Activated CD4-positive, alpha-beta memory T cell treated with anti-CD3 and anti-CD28 coated beads for 36 hours (primary cell): ENCODE measurements at regions of chr1 and their contacts with region 1.

Region 1: GRCh38 chr1:200971955-200972711 is 51.4 kb downstream of the KIF21B start:
- DNase-seq: peak; percentile 68
- H3K4me3 Mint-ChIP-seq: no peak overlapping the region
- H3K27ac Mint-ChIP-seq: no peak overlapping the region
- H3K4me1 Mint-ChIP-seq: no peaks in the 10 kb centered on the region
- H3K27me3 Mint-ChIP-seq: no peaks in the 10 kb centered on the region

Region 2: GRCh38 chr1:200931776-200932175 is 40.4 kb before region 1 on chr1:
- CTCF ChIA-PET with region 1: no interaction called
- POLR2A ChIA-PET with region 1: no interaction called
- intact Hi-C with region 1: no loop called
- DNase-seq: no peak
- H3K4me3 Mint-ChIP-seq: no peak overlapping the region
- H3K27ac Mint-ChIP-seq: no peak overlapping the region
- H3K4me1 Mint-ChIP-seq: peaks cover 2% of the 10 kb centered on the region
- H3K27me3 Mint-ChIP-seq: peaks cover 19% of the 10 kb centered on the region

Region 3: DNA sequence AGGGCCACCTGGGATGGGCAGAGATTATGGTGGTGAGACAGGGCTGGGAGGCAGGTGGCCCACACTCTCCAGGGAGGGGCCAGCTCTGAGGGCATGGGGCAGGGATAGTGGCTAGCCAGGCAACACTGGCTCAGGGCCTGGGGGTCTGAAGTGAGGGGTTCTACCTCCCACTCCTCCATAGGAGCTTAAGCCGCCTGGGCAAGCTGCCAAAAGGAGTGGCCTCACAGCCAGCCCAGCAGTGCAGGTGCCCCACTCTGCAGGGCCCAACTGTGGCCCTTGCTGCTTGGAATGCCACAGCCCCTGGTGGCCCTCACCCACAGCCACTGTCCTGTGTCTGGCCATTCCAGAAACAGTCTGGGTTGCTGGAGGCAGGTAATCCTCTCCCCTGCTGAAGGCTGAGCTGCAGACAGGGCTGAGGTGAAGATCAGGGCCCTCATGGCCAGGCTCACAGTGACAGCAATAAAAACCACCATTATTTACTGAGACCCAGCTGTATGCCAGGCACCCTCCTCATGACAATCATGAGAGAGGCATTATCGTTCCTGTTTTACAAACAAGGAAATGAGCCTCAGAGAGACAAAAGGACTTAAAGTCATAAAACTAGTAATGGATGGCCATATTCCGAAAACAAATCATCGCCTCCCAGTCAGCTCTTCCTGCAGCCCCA is 20.4 kb after region 1 on chr1:
- CTCF ChIA-PET with region 1: interaction called, 16 read pairs
- POLR2A ChIA-PET with region 1: no interaction called
- intact Hi-C with region 1: no loop called
- DNase-seq: no peak
- H3K4me3 Mint-ChIP-seq: no peak overlapping the region
- H3K27ac Mint-ChIP-seq: no peak overlapping the region
- H3K4me1 Mint-ChIP-seq: no peaks in the 10 kb centered on the region
- H3K27me3 Mint-ChIP-seq: no peaks in the 10 kb centered on the region

Region 4: GRCh38 chr1:201016211-201016651 is 44.1 kb after region 1 on chr1:
- CTCF ChIA-PET with region 1: interaction called, 96 read pairs
- POLR2A ChIA-PET with region 1: no interaction called
- intact Hi-C with region 1: no loop called
- DNase-seq: no peak
- H3K4me3 Mint-ChIP-seq: no peak overlapping the region
- H3K27ac Mint-ChIP-seq: peak overlapping the region; percentile 87
- H3K4me1 Mint-ChIP-seq: peaks cover 94% of the 10 kb centered on the region
- H3K27me3 Mint-ChIP-seq: no peaks in the 10 kb centered on the region

Region 5: DNA sequence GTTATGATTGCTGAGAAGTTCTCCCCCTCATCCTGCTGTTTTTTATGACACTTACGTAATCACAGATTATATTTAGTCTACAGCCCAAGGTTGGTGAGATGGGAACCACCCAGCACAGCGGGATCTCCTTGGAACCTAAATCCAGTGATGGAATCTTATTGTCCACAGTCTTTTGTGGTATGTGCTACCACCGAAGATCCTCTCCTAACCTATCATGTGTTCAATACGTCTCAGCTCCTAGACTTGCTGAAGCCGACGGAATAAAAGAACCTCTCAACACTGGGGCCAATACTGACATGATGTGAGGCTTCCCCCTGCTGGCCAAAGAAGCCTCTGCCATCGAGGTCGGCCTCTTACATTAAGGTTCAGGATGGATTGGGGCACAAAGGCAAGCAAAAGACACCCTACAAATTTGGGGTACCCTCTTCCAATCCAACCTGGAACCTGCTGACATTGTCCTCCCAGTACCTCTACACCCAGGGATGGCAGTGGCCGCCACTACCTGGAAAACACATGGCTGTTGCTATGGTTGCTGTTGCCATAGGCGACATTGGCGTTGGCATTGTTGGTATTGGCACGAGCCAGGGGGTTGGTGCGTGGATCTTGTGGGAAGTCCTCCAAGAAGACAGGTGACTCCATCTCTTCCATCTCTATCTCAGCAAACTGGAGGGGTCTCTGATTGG is 70.8 kb after region 1 on chr1:
- CTCF ChIA-PET with region 1: interaction called, 433 read pairs
- POLR2A ChIA-PET with region 1: interaction called, 4 read pairs
- intact Hi-C with region 1: loop called (anchors 1 kb)
- DNase-seq: peak; percentile 81
- H3K4me3 Mint-ChIP-seq: no peak overlapping the region
- H3K27ac Mint-ChIP-seq: no peak overlapping the region
- H3K4me1 Mint-ChIP-seq: peaks cover 3% of the 10 kb centered on the region
- H3K27me3 Mint-ChIP-seq: no peaks in the 10 kb centered on the region

Region 6: GRCh38 chr1:201053158-201053860 is 81.2 kb after region 1 on chr1:
- CTCF ChIA-PET with region 1: interaction called, 30 read pairs
- POLR2A ChIA-PET with region 1: no interaction called
- intact Hi-C with region 1: no loop called
- DNase-seq: no peak
- H3K4me3 Mint-ChIP-seq: no peak overlapping the region
- H3K27ac Mint-ChIP-seq: no peak overlapping the region
- H3K4me1 Mint-ChIP-seq: peaks cover 19% of the 10 kb centered on the region
- H3K27me3 Mint-ChIP-seq: peaks cover 8% of the 10 kb centered on the region

Region 7: DNA sequence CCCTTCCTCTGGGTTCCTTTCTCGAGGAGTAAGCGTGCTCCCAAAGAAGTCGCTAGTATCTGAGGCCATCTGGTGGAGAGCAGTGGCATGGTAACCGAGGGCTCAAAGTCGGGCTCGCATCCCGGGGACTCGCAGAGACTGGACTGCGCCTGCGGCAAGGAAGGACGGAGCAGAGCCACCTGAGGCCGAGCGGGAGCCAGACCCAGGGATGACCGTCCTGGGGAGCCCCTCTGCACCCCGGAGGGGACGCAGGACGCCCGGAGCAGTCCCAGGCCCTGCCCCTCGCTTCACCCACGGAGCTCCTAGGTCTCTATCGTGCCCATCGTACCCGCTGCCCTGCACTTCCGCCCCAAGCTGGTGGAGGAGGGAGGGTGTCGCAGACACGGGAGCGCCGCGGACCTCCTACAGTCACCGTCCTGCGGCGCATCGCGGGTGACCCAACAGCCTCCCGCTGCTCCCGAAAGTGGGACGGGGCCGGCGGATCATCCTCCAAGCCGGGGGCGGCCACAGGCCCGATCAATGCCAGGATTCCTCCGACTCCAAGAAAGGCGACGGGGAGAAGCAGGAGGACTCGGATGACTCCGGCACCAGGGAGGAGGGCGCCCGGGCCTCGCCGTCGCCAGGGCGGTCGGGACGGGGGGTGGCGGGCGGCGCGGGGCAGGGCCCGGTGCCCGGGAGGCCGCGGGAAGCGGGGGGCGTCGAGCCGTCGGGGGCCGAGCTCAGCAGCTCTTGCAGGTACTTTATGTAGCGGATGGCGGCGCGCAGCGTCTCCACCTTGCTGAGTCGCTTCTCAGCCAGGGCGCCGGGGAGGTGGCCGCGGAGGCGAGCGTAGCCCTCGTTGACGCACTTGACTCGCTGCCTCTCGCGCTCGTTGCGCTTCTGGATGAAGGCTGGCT is 142.4 kb after region 1 on chr1:
- CTCF ChIA-PET with region 1: interaction called, 70 read pairs
- POLR2A ChIA-PET with region 1: no interaction called
- intact Hi-C with region 1: loop called (anchors 2 kb)
- DNase-seq: peak; percentile 89
- H3K4me3 Mint-ChIP-seq: peak overlapping the region; percentile 86
- H3K27ac Mint-ChIP-seq: peak overlapping the region; percentile 6
- H3K4me1 Mint-ChIP-seq: no peaks in the 10 kb centered on the region
- H3K27me3 Mint-ChIP-seq: no peaks in the 10 kb centered on the region

Region 8: DNA sequence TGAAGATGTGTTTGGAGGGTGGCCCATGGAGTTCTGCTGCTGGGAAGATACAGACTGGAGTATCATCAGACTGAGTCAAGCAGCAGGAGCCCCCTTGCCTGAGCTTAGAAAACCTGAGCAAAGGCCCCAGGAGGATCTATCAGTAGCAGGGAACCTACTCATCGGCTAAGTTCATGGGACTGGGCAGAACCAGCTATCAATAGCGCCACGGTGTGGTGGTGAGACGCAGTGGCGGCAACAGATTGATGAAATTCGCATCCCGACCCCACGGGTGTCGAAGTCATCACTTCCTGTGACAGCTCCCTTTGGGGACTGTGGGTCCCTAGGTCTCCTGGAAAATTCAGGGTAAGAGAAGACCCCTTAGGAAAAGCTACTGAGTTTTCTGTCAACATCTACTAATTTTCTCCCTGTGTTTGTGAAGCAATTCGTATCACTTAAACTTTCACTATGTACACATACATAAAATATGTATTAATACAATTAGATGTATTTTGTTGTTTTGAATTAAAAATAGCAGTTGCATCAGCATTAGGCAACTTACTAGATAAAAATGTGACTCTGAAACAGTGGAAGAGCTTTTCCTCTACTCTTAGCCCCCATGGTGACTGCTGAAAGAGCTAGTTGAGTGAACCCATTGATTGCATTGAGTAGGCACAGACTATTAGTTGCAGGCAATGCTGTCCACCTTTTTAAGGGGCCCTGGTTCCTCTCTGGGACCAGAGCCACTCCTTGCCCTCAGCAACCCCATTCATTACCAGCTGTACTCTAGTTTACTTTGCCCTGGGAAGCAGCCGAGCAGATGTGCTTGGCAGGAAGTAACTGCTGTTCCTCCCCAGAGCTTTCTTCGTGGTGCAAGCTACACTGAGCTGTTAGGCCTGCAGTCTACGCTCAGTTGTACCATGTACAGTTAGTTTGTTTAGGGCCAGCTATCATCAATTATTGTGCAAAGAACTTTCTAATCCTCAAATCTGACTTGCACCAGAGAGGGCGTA is 147.4 kb after region 1 on chr1:
- CTCF ChIA-PET with region 1: interaction called, 70 read pairs
- POLR2A ChIA-PET with region 1: no interaction called
- intact Hi-C with region 1: loop called (anchors 2 kb)
- DNase-seq: peak; percentile 78
- H3K4me3 Mint-ChIP-seq: no peak overlapping the region
- H3K27ac Mint-ChIP-seq: no peak overlapping the region
- H3K4me1 Mint-ChIP-seq: peaks cover 5% of the 10 kb centered on the region
- H3K27me3 Mint-ChIP-seq: no peaks in the 10 kb centered on the region